ENCODE measurements at regions of chr12 and their contacts with region 1.

Region 1: DNA sequence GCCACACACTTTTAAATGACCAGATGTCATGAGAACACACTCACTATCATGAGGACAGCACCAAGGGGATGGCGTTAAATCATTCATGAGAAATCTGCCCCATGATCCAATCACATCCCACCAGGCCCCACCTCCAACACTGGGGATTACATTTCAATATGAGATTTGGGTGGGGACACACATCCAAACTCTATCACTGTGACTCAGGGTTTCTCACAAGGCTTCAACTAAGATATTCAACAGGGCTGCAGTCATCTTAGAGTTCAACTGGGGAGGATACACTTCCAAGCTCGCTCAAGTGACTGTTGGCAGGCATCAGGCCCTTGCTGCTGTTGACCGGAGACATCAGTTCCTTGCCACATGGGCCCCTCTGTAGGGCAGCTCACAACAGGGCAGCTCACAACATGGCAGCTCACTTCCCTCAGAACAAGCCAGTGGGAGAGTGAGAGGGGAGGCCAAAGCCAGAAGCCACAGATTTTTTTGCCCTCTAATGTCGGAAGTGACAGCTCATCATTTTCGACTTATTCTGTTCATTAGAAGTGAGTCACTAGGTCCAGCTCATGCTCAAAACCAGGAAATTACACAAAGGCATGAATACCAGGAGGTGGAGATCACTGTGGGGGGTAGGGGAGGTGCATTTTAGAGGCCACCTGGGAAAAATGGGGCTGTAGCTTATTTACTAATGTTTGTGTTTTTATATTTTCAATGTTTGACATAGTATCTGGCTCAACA is 50.8 kb upstream of the PTHLH start:
- DNase-seq: no peak
- H3K4me3 ChIP-seq: no peak overlapping the region
- H3K4me3 Mint-ChIP-seq: no peak overlapping the region
- H3K27ac Mint-ChIP-seq: no peak overlapping the region
- H3K4me1 ChIP-seq: no peaks in the 10 kb centered on the region
- H3K4me1 Mint-ChIP-seq: peaks cover 7% of the 10 kb centered on the region
- H3K27me3 ChIP-seq: no peaks in the 10 kb centered on the region
- H3K27me3 Mint-ChIP-seq: peaks cover 7% of the 10 kb centered on the region
- CTCF ChIP-seq: no peak

Region 2: DNA sequence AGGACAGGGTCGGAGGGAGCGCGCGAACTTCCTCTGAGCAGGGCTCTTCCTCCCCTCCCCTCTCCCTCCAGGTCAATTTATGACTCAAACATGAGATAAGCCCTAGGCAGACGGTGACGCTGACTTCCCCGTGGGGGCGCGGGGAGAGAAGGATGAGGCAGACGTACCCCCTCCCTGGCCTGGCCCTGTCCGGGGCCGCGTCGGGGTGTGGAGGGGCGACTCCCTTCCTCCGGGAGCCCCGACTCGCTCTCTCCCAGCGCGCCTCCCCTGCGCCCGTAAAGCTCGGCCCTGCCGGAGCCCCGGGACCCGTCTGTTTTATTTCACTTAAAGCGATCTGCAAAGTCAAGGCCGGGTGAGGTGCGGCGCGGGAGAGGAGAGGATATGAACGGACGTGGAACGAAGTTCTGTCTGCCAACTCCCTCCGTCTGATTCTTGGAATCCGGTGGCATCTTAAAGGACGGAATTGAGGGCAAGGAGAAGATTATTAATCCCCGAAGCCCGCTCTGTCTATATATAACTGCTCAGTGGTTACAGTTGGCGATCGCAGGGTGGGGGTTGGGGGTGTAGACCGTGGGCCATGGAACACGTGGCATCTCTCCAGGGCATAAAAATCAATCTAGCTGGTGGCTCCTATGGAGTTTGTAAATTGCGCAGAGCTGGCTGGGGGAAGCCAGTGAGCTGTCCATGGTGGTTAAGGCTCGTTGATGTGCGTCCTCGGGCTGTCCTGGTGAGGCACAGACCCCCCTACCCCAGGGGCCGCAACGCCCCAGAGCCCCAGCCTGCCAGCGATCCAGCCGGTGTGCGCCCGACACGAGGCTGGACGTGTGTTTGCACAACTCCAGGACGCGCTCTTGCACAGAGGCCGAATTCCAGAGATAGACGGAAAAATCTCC is 47.8 kb before region 1 on chr12:
- CTCF ChIA-PET with region 1: interaction called, 4 read pairs
- POLR2A ChIA-PET with region 1: no interaction called
- intact Hi-C with region 1: loop called (anchors 1 kb)
- DNase-seq: peak; percentile 53 to 61
- H3K4me3 ChIP-seq: peak overlapping the region; percentile 30
- H3K4me3 Mint-ChIP-seq: peak overlapping the region; percentile 74
- H3K27ac Mint-ChIP-seq: no peak overlapping the region
- H3K4me1 ChIP-seq: peaks cover 17% of the 10 kb centered on the region
- H3K4me1 Mint-ChIP-seq: peaks cover 21% of the 10 kb centered on the region
- H3K27me3 ChIP-seq: peaks cover 5% of the 10 kb centered on the region; the same call in 1 of the 2 replicates
- H3K27me3 Mint-ChIP-seq: peaks cover 50% of the 10 kb centered on the region
- CTCF ChIP-seq: no peak

Measured in Caco-2 (cell line).